ENCODE measurements at regions of chr15 and their contacts with region 1.

Region 1: GRCh38 chr15:63522225-63522578 is 17.8 kb downstream of the USP3 start:
- DNase-seq: no peak
- H3K4me3 Mint-ChIP-seq: no peak overlapping the region
- H3K27ac Mint-ChIP-seq: no peak overlapping the region
- H3K4me1 Mint-ChIP-seq: peaks cover 88% of the 10 kb centered on the region
- H3K27me3 Mint-ChIP-seq: no peaks in the 10 kb centered on the region

Region 2: DNA sequence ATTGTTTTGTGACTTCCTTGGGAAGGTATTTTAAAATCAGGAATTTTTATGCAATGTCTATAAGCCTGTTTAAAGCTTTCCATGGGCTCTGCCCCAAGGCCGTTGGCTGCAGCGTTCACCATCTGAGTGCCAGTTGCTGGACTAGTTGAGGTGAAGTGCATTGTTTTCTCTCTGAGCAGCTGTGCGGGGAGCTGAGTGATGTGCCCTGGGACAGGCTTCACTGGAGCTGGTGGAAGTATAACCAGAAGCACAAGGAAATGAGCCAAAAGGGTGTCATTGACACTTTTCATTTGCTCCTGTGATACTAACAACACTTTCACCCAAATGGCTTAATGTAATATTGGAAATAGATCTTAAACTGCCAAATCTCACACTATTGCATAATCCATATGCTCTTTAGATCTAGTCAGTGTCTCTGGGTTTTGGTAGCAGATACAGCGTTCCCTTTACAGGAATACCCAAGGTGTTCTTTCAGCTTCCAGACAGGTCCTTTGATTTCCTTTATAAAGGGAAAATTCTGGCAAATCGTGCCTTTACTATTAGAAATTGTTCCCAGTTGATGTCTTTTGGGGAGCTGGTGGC is 215.6 kb before region 1 on chr15:
- CTCF ChIA-PET with region 1: no interaction called
- intact Hi-C with region 1: no loop called
- DNase-seq: no peak
- H3K4me3 Mint-ChIP-seq: no peak overlapping the region
- H3K27ac Mint-ChIP-seq: no peak overlapping the region
- H3K4me1 Mint-ChIP-seq: no peaks in the 10 kb centered on the region
- H3K27me3 Mint-ChIP-seq: no peaks in the 10 kb centered on the region

Region 3: GRCh38 chr15:63509955-63510940 is 12.0 kb before region 1 on chr15:
- CTCF ChIA-PET with region 1: interaction called, 8 read pairs
- intact Hi-C with region 1: loop called (anchors 1 kb)
- DNase-seq: no peak
- H3K4me3 Mint-ChIP-seq: peak overlapping the region; percentile 69
- H3K27ac Mint-ChIP-seq: peak overlapping the region; percentile 85
- H3K4me1 Mint-ChIP-seq: peaks cover 86% of the 10 kb centered on the region
- H3K27me3 Mint-ChIP-seq: no peaks in the 10 kb centered on the region

Region 4: GRCh38 chr15:63539521-63539920 is 17.3 kb after region 1 on chr15:
- CTCF ChIA-PET with region 1: no interaction called
- intact Hi-C with region 1: loop called (anchors 2 kb)
- DNase-seq: no peak
- H3K4me3 Mint-ChIP-seq: no peak overlapping the region
- H3K27ac Mint-ChIP-seq: no peak overlapping the region
- H3K4me1 Mint-ChIP-seq: peaks cover 64% of the 10 kb centered on the region
- H3K27me3 Mint-ChIP-seq: no peaks in the 10 kb centered on the region